ENCODE measurements at regions of chr18 and their contacts with region 1.

Region 1: DNA sequence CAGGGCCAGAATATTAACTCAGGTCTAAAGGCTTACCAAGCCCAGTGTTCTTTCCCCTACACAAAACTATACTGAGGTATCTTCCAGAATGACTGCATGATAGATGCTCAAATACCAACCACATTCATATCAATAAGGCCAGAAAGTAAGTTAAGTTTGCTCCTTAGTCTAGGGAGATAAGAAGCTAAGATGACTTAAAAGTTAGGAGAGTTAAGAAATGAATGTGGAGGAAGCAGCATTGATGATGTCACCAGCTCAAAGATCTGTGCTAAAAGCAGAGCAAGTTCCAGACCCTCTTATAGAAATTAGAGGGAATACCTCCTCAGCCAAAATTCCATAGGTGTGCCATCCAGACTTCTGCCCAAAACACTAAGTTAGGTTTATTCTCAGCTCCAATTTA is 6.1 kb downstream of the PPP4R1 start:
- DNase-seq: peak; percentile 59 to 82 (median 66)
- ATAC-seq: peak; percentile 60
- H3K4me3 ChIP-seq: peak overlapping the region; percentile 4; the same call in 1 of the 2 replicates
- H3K27ac ChIP-seq: peak overlapping the region; percentile 74
- H3K4me1 ChIP-seq: peaks cover 3 to 41% of the 10 kb centered on the region in 2 experiments
- H3K27me3 ChIP-seq: no peaks in the 10 kb centered on the region
- CTCF ChIP-seq: no peak
- EP300 ChIP-seq: peak; percentile 88
- POLR2A ChIP-seq: no peak
- RAD21 ChIP-seq: no peak

Region 2: DNA sequence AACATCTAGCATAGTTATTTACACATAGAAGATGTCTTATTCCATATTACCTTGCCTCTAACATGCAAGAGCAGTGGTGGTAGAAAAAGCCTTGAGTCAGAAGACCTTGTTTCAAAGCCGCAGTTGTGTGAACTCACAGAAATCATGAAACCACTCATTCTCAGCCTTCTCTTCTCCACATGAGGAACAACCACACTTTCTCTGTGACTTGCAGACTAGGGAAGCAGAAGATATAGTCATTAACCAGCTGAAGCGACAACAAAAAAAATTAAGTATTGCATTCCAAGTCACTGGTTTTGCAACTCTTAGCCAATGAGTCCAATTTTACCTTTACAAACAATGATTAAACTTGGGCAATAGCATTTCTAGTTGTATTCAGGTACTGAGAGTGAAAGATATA is 254.7 kb before region 1 on chr18:
- CTCF ChIA-PET with region 1: no interaction called
- POLR2A ChIA-PET with region 1: no interaction called
- in situ Hi-C with region 1: no loop called
- intact Hi-C with region 1: no loop called
- DNase-seq: no peak
- ATAC-seq: no peak
- H3K4me3 ChIP-seq: no peak overlapping the region
- H3K27ac ChIP-seq: no peak overlapping the region
- H3K4me1 ChIP-seq: no peaks in the 10 kb centered on the region
- H3K27me3 ChIP-seq: no peaks in the 10 kb centered on the region
- CTCF ChIP-seq: no peak
- EP300 ChIP-seq: no peak
- POLR2A ChIP-seq: no peak
- RAD21 ChIP-seq: no peak

Region 3: DNA sequence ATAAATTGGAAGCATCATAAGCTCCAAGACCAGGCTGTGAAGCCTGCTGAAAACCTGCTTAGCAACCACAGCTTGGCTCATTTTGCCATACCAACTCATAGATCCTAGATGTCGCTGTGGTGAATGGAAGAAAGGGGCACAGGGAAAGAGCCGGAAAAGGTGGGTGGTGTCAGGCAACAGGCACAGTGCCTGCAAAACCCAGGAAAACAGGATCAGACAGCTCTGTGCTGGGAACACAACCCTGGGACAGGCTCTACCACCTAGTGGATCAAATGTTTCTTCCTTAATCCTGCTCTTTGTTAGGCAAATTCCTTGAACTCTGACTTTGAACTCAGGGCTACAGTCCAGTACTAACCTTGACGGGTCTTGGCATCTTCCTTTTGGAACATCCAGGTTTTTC is 242.1 kb before region 1 on chr18:
- CTCF ChIA-PET with region 1: no interaction called
- POLR2A ChIA-PET with region 1: no interaction called
- in situ Hi-C with region 1: no loop called
- intact Hi-C with region 1: no loop called
- DNase-seq: no peak
- ATAC-seq: no peak
- H3K4me3 ChIP-seq: no peak overlapping the region
- H3K27ac ChIP-seq: no peak overlapping the region
- H3K4me1 ChIP-seq: no peaks in the 10 kb centered on the region
- H3K27me3 ChIP-seq: no peaks in the 10 kb centered on the region
- CTCF ChIP-seq: no peak; a peak in 1 of 6 replicates
- EP300 ChIP-seq: no peak
- POLR2A ChIP-seq: no peak
- RAD21 ChIP-seq: no peak

Region 4: DNA sequence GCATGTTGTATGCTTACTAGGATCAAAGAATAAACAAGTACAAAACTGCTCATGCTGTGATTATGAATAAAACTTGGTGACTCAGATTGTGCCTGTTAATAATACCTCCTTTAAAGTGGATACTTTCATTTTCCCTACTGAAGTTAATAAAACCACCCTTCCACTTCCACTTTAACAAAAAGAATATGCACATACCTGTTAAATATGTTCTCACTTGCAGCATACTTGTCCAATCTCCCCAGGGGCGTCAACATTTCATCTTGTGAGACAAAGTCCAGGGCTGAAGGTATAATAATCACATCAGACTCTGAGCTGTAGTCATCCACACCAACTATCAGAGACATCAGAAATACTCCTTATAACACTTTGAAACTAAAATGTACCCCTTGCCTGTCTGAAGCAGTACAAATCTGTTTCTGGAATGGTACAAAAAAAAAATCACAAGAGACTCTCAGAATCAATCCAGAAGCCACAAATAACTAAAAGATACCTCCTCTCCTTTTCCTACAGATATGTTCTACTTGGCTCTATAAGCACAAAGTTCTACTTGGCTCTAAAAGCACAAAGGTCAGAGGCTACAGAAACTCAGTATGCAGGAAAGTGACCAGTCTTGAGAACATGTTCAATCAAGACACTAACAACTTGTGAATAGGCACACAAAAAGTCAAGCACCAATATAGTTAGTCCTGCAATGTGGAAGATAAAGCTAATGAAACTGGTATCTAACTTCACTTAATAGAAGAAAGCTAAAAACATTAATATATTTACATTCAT is 13.3 kb before region 1 on chr18:
- CTCF ChIA-PET with region 1: no interaction called
- POLR2A ChIA-PET with region 1: interaction called, 41 read pairs
- in situ Hi-C with region 1: no loop called
- intact Hi-C with region 1: no loop called
- DNase-seq: no peak
- ATAC-seq: no peak
- H3K4me3 ChIP-seq: no peak overlapping the region
- H3K27ac ChIP-seq: no peak overlapping the region
- H3K4me1 ChIP-seq: no peaks in the 10 kb centered on the region; a peak in 1 of 5 replicates
- H3K27me3 ChIP-seq: no peaks in the 10 kb centered on the region
- CTCF ChIP-seq: no peak
- EP300 ChIP-seq: no peak
- POLR2A ChIP-seq: no peak
- RAD21 ChIP-seq: no peak